ENCODE measurements at regions of chr6 and their contacts with region 1.

Region 1: DNA sequence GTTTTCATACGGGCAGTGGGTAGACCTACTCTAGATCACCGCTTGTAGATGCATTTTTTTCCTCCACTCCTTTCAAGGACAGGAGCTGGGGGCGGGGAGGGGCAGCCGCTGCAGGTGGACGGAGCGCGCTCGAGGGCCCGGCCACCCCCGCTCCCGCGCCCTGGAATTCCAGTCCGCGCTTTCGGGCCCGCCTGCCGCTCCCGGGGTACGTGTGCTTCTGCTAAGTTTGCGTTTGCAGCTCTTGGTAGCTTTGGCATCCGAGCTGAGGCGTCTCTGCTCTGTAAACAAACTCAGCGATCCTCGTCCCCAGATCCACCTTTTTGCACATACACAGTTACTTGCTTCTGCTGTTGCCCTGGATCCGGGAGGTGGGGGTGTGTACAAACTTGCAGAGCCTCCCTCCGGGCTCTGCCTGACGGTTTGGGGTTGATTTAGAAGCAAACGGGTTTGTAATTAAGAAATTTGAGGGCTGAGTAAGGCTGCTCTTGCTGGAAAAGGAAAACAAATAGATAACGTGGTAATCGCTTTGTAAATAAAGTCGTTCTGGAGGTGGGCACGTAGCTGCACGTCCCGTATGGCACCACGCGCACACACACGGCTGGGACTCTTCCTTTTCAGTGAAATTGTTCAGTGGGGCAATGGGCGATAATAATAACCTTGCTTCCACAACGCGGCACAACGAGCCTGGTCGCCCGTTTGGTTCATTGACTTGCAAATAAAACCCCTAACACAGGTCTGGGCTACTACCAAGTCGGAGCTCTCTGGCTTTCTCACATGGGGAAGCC is 976 bp upstream of the CITED2 start:
- DNase-seq: peak; percentile 91

Region 2: DNA sequence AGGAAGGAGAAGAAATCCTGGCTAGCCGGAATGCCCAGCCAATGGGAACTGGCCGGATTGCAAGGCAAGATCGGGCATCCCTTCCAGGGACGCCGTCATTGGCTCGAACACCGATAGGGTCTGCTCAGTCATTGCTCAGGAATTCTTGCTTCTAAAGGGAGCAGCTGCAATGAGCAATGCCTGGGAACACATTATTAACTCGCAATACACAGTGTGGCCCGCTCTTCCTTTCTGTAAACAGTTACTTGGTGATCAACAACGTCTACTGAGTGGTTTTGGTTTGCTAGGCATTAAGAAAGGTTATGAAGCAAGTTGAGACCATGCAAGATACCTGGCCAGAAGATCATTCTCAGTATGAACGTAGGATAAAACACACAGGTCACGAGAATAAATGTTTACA is 164.4 kb after region 1 on chr6:
- in situ Hi-C with region 1: loop called (anchors 10 kb)
- DNase-seq: peak; percentile 96

Region 3: DNA sequence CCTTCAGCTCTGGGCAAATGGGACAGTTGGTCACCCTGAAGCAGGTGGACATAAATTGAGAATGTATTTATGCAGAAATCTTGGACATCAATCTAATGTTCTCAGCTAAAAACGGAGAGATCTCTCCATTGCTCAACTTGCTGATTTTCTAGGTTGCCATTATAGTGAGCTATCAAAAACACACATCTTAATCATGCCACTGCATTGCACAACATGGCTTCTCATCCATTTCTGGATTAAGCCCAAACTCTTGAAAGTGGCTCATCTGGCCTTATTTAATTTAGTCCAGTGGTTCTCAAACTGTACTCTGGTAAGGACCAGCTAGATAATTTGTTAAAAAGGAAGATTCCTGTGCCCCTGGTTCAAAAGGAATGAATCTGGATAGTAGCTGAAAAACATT is 323.9 kb after region 1 on chr6:
- in situ Hi-C with region 1: no loop called
- DNase-seq: no peak

Measured in ACHN (cell line).